Activated CD4-positive, alpha-beta T cell treated with anti-CD3 and anti-CD28 coated beads for 36 hours (primary cell): ENCODE measurements at regions of chr3 and their contacts with region 1.

Region 1: DNA sequence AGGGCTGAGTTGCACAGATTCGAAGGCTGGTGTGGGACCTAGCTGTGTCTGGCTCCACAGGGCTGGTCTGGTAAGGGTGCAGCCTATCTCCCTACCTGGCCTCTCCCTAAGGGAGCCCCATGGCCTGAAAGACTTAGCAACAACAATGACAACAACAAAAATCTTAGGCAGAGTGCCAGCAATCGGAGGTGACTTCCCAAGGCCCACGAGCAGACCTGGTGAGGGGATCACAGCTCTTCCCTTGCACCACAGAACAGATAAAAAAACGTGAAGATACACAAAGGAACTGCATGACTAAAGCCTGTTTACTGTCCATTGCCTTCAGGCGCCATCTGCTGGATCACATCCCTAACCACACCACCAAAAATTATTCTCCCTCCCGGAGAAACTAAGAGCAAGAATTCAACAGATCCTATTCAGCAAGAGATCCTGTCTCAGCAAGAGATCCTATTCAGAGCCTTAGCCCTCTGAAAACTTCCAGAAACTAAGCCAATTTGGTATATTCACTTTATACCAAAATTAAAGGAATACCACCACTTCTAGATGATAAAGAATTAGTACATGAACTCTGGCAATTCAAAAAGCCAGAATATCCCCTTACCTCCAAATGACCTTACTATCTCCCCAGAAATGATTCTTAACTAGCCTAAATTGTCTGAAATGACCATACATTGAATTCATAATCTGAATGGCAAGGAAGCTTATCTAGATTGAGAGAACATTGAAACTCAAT is 24.1 kb upstream of the OR5K4 start:
- DNase-seq: peak; percentile 60
- ATAC-seq: peak; percentile 67
- H3K4me3 Mint-ChIP-seq: no peak overlapping the region
- H3K27ac Mint-ChIP-seq: no peak overlapping the region
- H3K4me1 Mint-ChIP-seq: no peaks in the 10 kb centered on the region
- H3K27me3 Mint-ChIP-seq: peaks cover 19% of the 10 kb centered on the region

Region 2: GRCh38 chr3:97409612-97410011 is 919.9 kb before region 1 on chr3:
- CTCF ChIA-PET with region 1: no interaction called
- POLR2A ChIA-PET with region 1: no interaction called
- intact Hi-C with region 1: no loop called
- DNase-seq: no peak
- ATAC-seq: no peak
- H3K4me3 Mint-ChIP-seq: no peak overlapping the region
- H3K27ac Mint-ChIP-seq: no peak overlapping the region
- H3K4me1 Mint-ChIP-seq: no peaks in the 10 kb centered on the region
- H3K27me3 Mint-ChIP-seq: no peaks in the 10 kb centered on the region

Region 3: GRCh38 chr3:97793420-97794019 is 536.0 kb before region 1 on chr3:
- CTCF ChIA-PET with region 1: no interaction called
- POLR2A ChIA-PET with region 1: no interaction called
- intact Hi-C with region 1: loop called in 1 of 2 experiments (anchors 10 kb)
- DNase-seq: no peak
- ATAC-seq: peak; percentile 60
- H3K4me3 Mint-ChIP-seq: no peak overlapping the region
- H3K27ac Mint-ChIP-seq: no peak overlapping the region
- H3K4me1 Mint-ChIP-seq: no peaks in the 10 kb centered on the region
- H3K27me3 Mint-ChIP-seq: no peaks in the 10 kb centered on the region

Region 4: DNA sequence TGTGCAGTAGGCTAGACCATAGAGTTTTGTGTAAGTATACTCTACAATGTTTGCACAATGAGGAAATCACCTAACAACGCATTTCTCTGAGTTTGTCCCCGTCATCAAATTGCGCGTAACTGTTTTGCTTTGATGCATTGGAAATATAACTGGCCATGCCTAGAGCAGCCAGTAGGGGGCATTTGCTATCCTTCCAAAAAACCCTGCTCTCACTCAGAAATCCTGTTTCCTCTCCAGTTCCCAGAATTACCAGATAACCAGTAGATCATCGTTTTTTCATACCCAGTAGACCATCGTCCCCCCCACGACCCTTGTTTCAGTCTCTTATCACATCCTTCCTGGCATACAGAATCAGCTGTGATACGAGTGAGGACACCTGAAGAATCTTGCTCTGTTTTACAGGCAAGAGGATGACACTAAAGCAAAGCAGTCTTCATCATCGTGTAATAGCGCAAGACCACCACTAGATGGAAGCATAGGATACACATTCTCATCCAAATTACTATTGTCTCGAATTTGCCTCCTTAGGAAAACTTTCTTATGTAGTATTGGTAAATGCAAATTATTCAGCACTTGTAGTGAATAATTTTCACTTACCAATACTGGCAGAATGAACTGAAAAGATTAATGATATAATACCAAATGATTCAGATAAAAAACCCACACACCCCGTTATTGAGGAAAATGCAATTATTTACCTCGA is 290.1 kb before region 1 on chr3:
- CTCF ChIA-PET with region 1: interaction called, 55 read pairs
- POLR2A ChIA-PET with region 1: no interaction called
- intact Hi-C with region 1: loop called (anchors 1 kb)
- DNase-seq: peak; percentile 84
- ATAC-seq: peak; percentile 88
- H3K4me3 Mint-ChIP-seq: peak overlapping the region; percentile 76
- H3K27ac Mint-ChIP-seq: peak overlapping the region; percentile 97
- H3K4me1 Mint-ChIP-seq: peaks cover 12% of the 10 kb centered on the region
- H3K27me3 Mint-ChIP-seq: peaks cover 4% of the 10 kb centered on the region

Region 5: GRCh38 chr3:98188545-98188944 is 141.0 kb before region 1 on chr3:
- CTCF ChIA-PET with region 1: interaction called, 7 read pairs
- POLR2A ChIA-PET with region 1: no interaction called
- intact Hi-C with region 1: loop called (anchors 1 to 2 kb)
- DNase-seq: no peak
- ATAC-seq: peak; percentile 49
- H3K4me3 Mint-ChIP-seq: no peak overlapping the region
- H3K27ac Mint-ChIP-seq: no peak overlapping the region
- H3K4me1 Mint-ChIP-seq: peaks cover 4% of the 10 kb centered on the region
- H3K27me3 Mint-ChIP-seq: peaks cover 5% of the 10 kb centered on the region

Region 6: GRCh38 chr3:98657457-98657856 is 327.9 kb after region 1 on chr3:
- CTCF ChIA-PET with region 1: interaction called, 3 read pairs
- POLR2A ChIA-PET with region 1: no interaction called
- intact Hi-C with region 1: loop called in 1 of 2 experiments (anchors 5 kb)
- DNase-seq: peak; percentile 79
- ATAC-seq: peak; percentile 88
- H3K4me3 Mint-ChIP-seq: no peak overlapping the region
- H3K27ac Mint-ChIP-seq: no peak overlapping the region
- H3K4me1 Mint-ChIP-seq: peaks cover 3% of the 10 kb centered on the region
- H3K27me3 Mint-ChIP-seq: peaks cover 16% of the 10 kb centered on the region